ENCODE measurements at regions of chr7 and their contacts with region 1.

Region 1: DNA sequence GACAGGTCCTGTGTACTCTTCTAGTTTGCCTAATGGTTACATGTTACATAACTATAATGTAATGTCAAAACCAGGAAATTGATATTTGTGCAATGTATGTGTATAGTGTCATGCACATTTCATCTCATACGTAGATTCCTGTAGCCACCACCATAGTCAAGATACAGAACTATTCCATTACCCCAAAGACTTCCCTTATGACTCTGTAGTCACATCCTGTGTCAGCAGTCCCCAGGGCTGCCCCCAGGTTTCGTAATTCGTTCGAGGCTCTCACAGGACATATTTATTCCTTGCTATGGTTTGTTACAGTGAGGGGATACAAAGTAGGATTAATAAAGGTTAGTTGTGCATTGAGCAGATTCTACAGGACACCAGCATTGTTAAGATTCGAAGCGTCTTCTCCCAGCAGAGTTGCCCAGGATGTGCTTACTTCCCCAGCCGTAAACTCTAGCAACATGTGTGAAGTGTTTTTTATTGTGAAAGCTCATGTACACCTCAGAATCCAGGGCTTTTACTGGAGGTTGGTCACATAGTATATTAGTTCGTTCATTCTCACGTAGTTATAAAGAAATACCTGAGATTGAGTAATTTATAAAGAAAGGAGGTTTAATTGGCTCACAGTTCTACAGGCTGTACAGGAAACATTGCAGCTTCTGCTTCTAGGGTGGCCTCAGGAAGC is 18.6 kb downstream of the RABGEF1 start:
- DNase-seq: peak; percentile 72
- H3K4me3 Mint-ChIP-seq: no peak overlapping the region
- H3K27ac Mint-ChIP-seq: peak overlapping the region; percentile 49
- H3K4me1 Mint-ChIP-seq: peaks cover 36% of the 10 kb centered on the region
- H3K27me3 Mint-ChIP-seq: no peaks in the 10 kb centered on the region

Region 2: DNA sequence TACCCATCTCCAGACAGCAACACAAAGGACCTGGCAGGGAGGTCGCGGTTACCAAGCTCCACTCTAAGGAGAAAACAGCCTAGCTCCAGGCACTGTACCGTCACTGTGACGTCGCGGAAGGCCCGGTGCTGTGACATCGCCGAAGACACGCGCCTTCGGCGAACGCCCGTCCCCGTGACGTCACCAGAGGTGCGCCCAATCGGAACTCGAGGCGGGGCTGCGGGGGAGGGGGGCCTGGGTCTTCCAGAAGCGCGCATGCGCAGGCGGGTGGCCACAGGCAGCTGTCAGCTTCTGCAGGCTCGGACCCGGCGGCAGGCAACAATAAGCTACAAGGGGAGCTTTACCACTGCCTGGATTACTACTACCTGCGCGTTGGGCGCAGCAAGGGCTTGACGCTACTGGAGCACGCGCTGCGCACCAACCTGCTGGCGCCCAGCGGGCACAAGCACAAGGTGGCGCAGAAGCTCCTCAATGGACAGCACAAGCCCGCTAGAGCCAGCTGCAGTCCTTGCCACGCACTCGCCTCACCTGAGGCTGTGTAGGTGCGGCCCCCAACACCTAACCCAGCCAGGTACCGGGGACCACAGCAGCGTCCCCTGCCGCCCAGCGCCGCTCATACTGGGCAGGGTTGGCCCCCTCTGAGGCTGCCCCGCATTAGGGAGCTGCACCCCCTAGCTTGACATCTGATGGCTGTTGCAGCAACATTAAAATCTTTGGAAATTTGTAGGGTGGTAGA is 345.5 kb before region 1 on chr7:
- CTCF ChIA-PET with region 1: no interaction called
- POLR2A ChIA-PET with region 1: no interaction called
- intact Hi-C with region 1: loop called (anchors 10 kb)
- DNase-seq: peak; percentile 86
- H3K4me3 Mint-ChIP-seq: peak overlapping the region; percentile 55
- H3K27ac Mint-ChIP-seq: no peak overlapping the region
- H3K4me1 Mint-ChIP-seq: peaks cover 7% of the 10 kb centered on the region
- H3K27me3 Mint-ChIP-seq: no peaks in the 10 kb centered on the region

Region 3: DNA sequence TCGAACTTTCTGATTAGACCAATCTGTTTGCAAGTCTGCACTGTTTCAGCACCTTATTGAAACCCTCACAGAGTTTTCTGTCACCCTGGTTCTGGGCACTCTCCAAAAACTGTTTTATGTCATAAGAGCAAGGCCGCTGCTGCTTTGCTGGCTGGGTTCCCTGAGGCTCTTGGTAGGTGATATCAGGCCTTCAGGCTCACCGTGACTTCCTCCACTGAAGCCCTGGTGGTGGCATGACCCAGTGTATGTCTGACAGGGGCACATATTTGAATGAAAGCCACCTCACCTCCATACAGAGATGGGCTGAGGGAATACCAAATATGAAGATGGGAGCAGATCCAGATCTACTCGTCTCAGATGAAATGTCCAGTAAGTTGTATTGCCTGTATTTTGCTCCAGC is 10.3 kb before region 1 on chr7:
- CTCF ChIA-PET with region 1: no interaction called
- POLR2A ChIA-PET with region 1: no interaction called
- intact Hi-C with region 1: loop called (anchors 1 kb)
- DNase-seq: no peak
- H3K4me3 Mint-ChIP-seq: no peak overlapping the region
- H3K27ac Mint-ChIP-seq: no peak overlapping the region
- H3K4me1 Mint-ChIP-seq: peaks cover 38% of the 10 kb centered on the region
- H3K27me3 Mint-ChIP-seq: no peaks in the 10 kb centered on the region

Region 4: DNA sequence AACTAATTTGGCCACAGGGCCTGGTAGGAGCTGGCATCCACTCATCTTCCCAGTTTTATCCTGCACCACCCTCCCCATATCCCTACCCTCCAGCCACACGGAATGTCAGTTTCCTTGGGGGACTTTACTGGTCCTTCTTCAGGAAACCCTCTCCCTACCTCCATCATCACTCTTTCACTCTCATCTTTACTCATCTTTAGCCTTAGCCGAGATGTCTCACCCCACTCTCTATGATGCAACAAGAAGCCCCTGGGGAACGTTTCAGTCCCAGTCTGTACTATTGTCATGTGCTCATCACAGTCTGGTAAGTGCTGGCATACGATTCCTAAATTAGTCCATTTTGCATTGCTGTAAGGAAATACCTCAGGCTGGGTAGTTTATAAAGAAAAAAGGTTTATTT is 127.1 kb after region 1 on chr7:
- CTCF ChIA-PET with region 1: no interaction called
- POLR2A ChIA-PET with region 1: no interaction called
- intact Hi-C with region 1: loop called (anchors 10 kb)
- DNase-seq: peak; percentile 35
- H3K4me3 Mint-ChIP-seq: no peak overlapping the region
- H3K27ac Mint-ChIP-seq: no peak overlapping the region
- H3K4me1 Mint-ChIP-seq: peaks cover 31% of the 10 kb centered on the region
- H3K27me3 Mint-ChIP-seq: no peaks in the 10 kb centered on the region

Measured in activated CD4-positive, alpha-beta memory T cell treated with anti-CD3 and anti-CD28 coated beads for 36 hours (primary cell).